ENCODE measurements at regions of chr5 and their contacts with region 1.

Region 1: GRCh38 chr5:96771395-96771794 is 36.4 kb downstream of the ERAP1 start:
- DNase-seq: no peak
- ATAC-seq: no peak

Region 2: GRCh38 chr5:96807075-96807654 is 35.8 kb after region 1 on chr5:
- intact Hi-C with region 1: no loop called
- DNase-seq: peak; percentile 86
- ATAC-seq: peak; percentile 55

Region 3: GRCh38 chr5:96896806-96897205 is 125.4 kb after region 1 on chr5:
- intact Hi-C with region 1: no loop called
- DNase-seq: no peak
- ATAC-seq: peak; percentile 68

Region 4: DNA sequence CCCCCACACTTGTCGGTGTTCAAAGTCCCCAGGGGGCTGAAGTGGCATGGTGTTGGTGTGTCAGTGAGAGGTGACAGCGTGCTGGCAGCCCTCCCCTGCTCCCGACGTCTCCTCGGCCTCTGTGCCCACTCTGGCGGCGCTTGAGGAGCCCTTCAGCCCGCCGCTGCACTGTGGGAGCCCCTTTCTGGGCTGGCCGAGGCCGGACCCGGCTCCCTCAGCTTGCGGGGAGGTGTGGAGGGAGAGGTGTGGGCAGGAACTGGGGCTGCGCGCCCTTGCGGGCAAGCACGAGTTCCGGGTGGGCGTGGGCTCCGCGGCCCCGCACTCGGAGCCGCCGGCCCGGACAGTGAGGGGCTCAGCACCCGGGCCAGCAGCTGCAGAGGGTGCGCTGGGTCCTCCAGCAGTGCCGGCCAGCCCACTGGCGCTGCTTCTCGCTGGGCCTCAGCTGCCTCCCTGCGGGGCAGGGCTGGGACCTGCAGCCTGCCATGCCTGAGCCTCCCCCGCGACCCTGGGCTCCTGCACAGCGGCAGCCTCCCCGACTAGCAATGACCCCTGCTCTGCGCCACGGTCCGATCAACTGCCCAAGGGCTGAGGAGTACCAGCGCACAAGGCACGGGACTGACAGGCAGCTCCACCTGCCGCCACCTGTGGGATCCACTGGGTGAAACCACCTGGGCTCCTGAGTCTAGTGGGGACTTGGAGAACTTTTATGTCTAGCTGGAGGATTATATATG is 635.7 kb after region 1 on chr5:
- intact Hi-C with region 1: loop called (anchors 5 kb)
- DNase-seq: no peak
- ATAC-seq: no peak